Endothelial cell of umbilical vein (primary cell): ENCODE measurements at regions of chr6 and their contacts with region 1.

Region 1: DNA sequence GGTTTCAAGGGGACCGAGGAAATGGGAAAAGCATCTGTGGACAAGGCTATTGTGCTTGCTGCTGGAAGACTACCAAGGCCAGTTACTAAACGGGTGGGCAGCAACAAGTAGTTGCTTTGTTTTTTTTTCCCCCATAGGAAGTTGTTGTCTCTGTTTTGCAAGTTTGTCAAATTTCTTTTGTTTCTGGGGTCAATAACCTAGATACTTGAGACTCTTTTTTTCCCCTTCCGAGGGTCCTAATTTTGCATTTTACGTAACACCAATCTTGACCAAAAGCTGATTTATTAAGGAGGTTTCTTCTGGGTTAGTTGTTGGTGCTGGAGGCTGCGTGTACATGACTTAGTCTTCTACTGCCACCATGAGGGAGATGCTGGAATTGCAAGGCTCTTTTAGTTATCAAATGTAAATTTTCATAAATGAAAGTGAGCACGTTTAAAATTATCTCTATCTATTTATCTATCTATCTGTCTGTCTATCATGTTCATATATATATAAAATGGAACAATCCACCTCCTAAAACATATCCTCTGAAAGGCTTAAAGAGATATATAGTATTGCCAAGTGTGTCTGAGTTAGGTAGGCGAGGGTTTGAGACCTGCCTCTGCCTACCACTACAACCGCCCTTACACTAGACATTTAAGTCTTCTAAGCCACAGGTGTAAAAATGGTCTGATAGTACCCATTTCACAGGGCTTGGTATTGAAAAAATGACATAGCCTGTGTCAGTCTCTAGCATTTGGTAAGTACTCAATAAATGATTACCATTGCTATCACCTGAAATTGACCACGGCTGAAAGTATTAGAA is 60.2 kb downstream of the GCLC start:
- DNase-seq: peak; percentile 84
- H3K4me3 ChIP-seq: no peak overlapping the region
- H3K27ac ChIP-seq: no peak overlapping the region
- H3K4me1 ChIP-seq: no peaks in the 10 kb centered on the region
- H3K27me3 ChIP-seq: peaks cover 10 to 25% of the 10 kb centered on the region in 2 experiments
- CTCF ChIP-seq: peak; percentile 73 to 75
- POLR2A ChIP-seq: no peak

Region 2: GRCh38 chr6:52839119-52840055 is 645.3 kb before region 1 on chr6:
- CTCF ChIA-PET with region 1: no interaction called
- POLR2A ChIA-PET with region 1: no interaction called
- dilution Hi-C with region 1: no loop called
- intact Hi-C with region 1: loop called (anchors 5 kb)
- DNase-seq: peak; percentile 65
- H3K4me3 ChIP-seq: no peak overlapping the region
- H3K27ac ChIP-seq: no peak overlapping the region
- H3K4me1 ChIP-seq: no peaks in the 10 kb centered on the region
- H3K27me3 ChIP-seq: peaks cover 0 to 5% of the 10 kb centered on the region in 2 experiments
- CTCF ChIP-seq: peak; percentile 66 to 78
- POLR2A ChIP-seq: no peak

Region 3: DNA sequence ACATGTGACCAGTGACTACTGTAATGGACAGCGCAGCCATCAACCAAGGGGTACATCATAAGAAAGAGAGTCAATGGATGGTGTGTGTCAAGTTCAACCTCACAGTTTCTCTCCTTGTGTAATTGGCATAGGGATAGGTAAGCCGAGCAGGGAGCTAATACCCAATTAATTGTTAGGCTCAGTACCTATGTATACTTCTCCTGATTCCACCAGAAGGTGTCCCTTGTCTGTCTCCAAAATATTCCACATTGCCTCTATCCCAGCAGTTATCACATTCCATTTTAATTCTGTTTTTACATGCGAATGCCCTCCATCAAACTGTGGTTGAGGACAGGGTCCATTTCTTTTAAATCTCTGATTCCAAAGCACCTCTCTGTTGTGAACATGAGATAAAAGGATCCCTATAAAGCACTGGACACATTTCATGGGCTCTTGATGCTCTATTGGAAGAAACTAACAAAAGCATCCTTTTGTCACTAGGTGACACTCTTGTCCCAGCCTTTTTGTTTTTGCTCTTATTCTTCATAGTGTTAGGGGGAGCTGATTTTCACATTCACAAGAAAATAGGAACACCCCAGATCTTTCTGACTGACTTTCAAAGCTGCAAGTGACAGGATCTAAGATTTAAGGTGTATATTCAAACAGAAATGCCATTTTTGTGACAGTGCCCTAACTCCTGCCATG is 380.5 kb before region 1 on chr6:
- CTCF ChIA-PET with region 1: interaction called, 11 read pairs
- POLR2A ChIA-PET with region 1: no interaction called
- dilution Hi-C with region 1: no loop called
- intact Hi-C with region 1: loop called (anchors 10 kb)
- DNase-seq: peak; percentile 18
- H3K4me3 ChIP-seq: no peak overlapping the region
- H3K27ac ChIP-seq: no peak overlapping the region
- H3K4me1 ChIP-seq: no peaks in the 10 kb centered on the region
- H3K27me3 ChIP-seq: no peaks in the 10 kb centered on the region
- CTCF ChIP-seq: no peak
- POLR2A ChIP-seq: no peak

Region 4: GRCh38 chr6:53284901-53285300 is 199.8 kb before region 1 on chr6:
- CTCF ChIA-PET with region 1: no interaction called
- POLR2A ChIA-PET with region 1: no interaction called
- dilution Hi-C with region 1: no loop called
- intact Hi-C with region 1: no loop called
- DNase-seq: no peak
- H3K4me3 ChIP-seq: no peak overlapping the region
- H3K27ac ChIP-seq: no peak overlapping the region
- H3K4me1 ChIP-seq: no peaks in the 10 kb centered on the region
- H3K27me3 ChIP-seq: no peaks in the 10 kb centered on the region
- CTCF ChIP-seq: no peak
- POLR2A ChIP-seq: no peak

Region 5: GRCh38 chr6:53410508-53411258 is 74.0 kb before region 1 on chr6:
- CTCF ChIA-PET with region 1: interaction called, 3 read pairs
- POLR2A ChIA-PET with region 1: no interaction called
- dilution Hi-C with region 1: no loop called
- intact Hi-C with region 1: loop called (anchors 1 kb)
- DNase-seq: peak; percentile 56
- H3K4me3 ChIP-seq: no peak overlapping the region
- H3K27ac ChIP-seq: no peak overlapping the region
- H3K4me1 ChIP-seq: no peaks in the 10 kb centered on the region
- H3K27me3 ChIP-seq: peaks cover 9 to 16% of the 10 kb centered on the region in 2 experiments
- CTCF ChIP-seq: peak; percentile 55 to 61
- POLR2A ChIP-seq: no peak